Mucosa of descending colon (tissue), 3 donors: ENCODE measurements at regions of chr5 and their contacts with region 1.

Region 1: GRCh38 chr5:80487829-80488721 is at the start of gene FAM151B:
- DNase-seq: peak; percentile 89 to 95 (median 93)
- ATAC-seq: peak; percentile 96
- H3K4me3 ChIP-seq: peak within 1 kb of the TSS; percentile 23
- H3K4me1 ChIP-seq: peaks cover 11% of the 10 kb centered on the region
- CTCF ChIP-seq: no peak
- total RNA-seq, gene FAM151B: 1.2 to 3.2 (median 1.5) TPM

Region 2: GRCh38 chr5:80407735-80408482 is 80.2 kb before region 1 on chr5 and contains the start of gene ZFYVE16:
- intact Hi-C with region 1: no loop called
- DNase-seq: peak; percentile 99
- ATAC-seq: peak; percentile 98
- H3K4me3 ChIP-seq: peak within 1 kb of the TSS; percentile 72
- H3K4me1 ChIP-seq: peaks cover 9% of the 10 kb centered on the region
- CTCF ChIP-seq: no peak
- total RNA-seq, gene ZFYVE16: 32.4 to 56.9 (median 52.2) TPM

Region 3: GRCh38 chr5:80672140-80672736 is 184.2 kb after region 1 on chr5:
- intact Hi-C with region 1: loop called (anchors 10 kb)
- DNase-seq: peak in 2 of 3 donors; percentile 58 to 86
- ATAC-seq: peak; percentile 80
- H3K4me3 ChIP-seq: no peak overlapping the region
- H3K4me1 ChIP-seq: no peaks in the 10 kb centered on the region
- CTCF ChIP-seq: peak; percentile 65

Region 4: DNA sequence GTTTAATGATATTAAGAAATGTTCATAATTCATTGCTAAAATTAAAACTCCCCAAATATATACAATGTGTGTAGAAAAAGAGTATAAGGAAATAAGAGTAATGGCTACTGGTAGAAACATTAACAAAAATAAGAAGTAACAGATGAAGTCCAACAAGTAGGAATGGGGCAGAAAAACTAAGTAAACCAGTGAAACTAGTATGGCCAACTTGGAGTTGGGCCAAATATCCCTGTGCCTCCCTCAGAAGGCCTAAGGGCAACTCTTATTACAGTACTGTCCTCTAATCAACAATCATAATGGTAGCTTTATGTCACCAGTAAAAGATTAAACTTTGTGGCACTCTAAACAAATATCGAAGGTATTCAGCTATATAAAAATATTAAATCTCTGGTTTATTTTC is 1169.3 kb after region 1 on chr5:
- intact Hi-C with region 1: loop called in 1 of 2 experiments (anchors 10 kb)
- DNase-seq: peak in 1 of 3 donors; percentile 75
- ATAC-seq: peak; percentile 76
- H3K4me3 ChIP-seq: no peak overlapping the region
- H3K4me1 ChIP-seq: no peaks in the 10 kb centered on the region
- CTCF ChIP-seq: no peak